Activated CD4-positive, alpha-beta memory T cell treated with anti-CD3 and anti-CD28 coated beads for 36 hours (primary cell): ENCODE measurements at regions of chr6 and their contacts with region 1.

Region 1: DNA sequence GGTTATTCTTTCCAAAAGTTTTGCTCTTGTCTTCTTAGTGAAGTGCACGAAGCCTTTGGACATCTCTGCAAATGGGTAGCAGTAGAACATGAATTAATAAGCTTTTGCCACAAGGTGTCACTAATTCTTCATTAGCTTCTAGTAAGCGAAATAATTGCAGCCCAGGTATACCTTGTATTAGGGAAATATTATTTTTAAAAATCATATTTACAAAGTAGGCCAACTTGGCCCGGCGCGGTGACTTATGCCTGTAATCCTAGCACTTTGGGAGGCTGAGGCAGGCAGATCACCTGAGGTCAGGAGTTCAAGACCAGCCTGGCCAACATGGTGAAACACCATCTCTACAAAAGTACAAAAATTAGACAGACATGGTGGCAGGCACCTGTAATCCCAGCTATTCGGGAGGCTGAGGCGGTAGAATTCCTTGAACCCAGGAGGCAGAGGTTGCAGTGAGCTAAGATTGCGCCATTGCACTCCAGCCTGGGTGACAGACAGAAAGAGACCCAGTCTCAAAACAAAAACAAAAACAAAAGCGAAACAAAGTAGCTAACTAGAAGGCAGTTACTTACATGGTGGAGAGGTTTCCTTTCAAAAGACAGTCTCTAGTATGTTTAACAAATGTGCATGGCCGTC is 8.8 kb upstream of the RSPH3 start:
- DNase-seq: peak; percentile 23
- H3K4me3 Mint-ChIP-seq: peak overlapping the region; percentile 42
- H3K27ac Mint-ChIP-seq: peak overlapping the region; percentile 14
- H3K4me1 Mint-ChIP-seq: peaks cover 35% of the 10 kb centered on the region
- H3K27me3 Mint-ChIP-seq: no peaks in the 10 kb centered on the region

Region 2: DNA sequence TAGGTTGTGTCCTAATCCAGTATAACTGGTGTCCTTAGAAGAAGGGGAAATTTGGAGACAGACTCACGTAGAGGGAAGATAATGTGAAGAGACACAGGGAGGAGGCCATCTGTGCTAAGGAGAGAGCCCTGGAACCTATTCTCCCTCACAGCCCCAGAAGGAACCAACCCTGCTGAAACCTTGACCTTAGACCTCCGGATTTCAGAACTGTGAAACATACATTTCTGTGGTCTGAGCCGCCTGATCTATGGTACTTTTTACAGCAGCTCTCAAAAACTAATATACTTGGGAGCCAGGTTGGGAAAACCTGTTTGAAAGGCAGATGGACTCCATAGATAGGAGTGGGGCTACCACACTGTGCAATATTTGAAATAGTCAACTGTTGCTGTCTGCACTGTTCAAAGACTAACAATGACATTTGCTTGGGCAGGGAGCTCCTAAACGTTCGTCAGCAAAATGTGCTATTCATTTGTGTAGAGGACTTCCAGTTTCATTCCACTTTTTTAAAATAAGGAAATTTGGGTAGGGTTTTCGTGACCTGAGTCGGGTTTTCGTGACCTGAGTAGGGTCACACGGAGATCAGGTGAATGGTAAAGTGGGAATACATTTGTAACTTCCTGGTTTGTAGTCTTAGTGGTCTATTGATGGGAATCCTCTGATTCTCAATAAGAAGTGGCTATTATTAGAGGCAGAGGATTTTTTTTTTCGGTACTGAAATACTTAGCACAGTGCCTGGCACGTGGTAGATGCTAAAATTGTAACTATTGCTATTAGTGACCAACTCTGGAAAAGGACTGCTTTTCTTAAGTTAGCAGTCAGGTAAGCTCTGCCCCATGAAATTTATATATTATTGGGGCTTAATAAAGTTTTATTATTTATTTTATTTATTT is 24.6 kb after region 1 on chr6:
- CTCF ChIA-PET with region 1: interaction called, 11 read pairs
- POLR2A ChIA-PET with region 1: no interaction called
- intact Hi-C with region 1: no loop called
- DNase-seq: no peak
- H3K4me3 Mint-ChIP-seq: no peak overlapping the region
- H3K27ac Mint-ChIP-seq: no peak overlapping the region
- H3K4me1 Mint-ChIP-seq: peaks cover 43% of the 10 kb centered on the region
- H3K27me3 Mint-ChIP-seq: no peaks in the 10 kb centered on the region

Region 3: DNA sequence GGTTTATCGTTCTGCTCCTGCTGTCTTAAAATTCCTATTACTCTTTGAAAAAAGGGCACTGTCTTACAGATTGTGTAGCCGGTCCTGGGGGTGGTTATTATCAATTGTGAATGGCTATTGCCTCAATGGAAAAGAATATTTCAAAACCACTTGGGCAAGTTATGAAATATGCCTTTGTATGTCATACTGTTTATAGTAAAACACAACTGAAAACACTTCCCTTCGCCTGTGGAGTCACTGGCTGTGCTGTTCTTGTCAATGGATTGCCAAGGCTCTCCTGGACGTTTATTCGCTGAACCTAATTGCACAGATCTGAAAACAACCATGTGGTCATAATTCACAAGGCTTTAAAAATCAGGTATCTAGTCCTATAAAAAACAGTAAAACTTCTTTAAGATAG is 83.9 kb after region 1 on chr6:
- CTCF ChIA-PET with region 1: interaction called, 12 read pairs
- POLR2A ChIA-PET with region 1: no interaction called
- intact Hi-C with region 1: no loop called
- DNase-seq: no peak
- H3K4me3 Mint-ChIP-seq: no peak overlapping the region
- H3K27ac Mint-ChIP-seq: no peak overlapping the region
- H3K4me1 Mint-ChIP-seq: peaks cover 66% of the 10 kb centered on the region
- H3K27me3 Mint-ChIP-seq: no peaks in the 10 kb centered on the region

Region 4: DNA sequence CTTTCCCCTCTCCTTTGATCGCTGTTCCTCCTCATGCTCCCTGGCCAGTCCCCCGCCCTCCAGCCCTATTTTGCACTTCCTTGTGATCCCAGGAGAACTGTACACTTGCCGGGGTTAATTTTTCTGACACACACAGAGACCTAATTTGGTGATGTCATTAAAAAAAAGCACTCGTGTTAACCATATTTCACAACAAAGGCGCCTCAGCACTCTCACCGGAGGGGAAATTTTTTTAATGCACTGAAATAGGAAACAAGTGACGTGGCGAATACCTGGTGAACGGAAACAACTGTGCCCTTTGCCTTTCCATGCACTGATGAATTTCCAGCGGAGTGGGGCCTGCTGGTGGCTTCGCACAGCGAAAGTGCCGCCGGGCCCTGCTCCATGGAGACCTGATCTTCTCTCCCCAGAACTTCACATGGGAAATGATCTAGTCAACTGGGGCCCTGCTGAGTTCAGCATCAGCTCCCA is 89.9 kb after region 1 on chr6:
- CTCF ChIA-PET with region 1: interaction called, 498 read pairs
- POLR2A ChIA-PET with region 1: interaction called, 4 read pairs
- intact Hi-C with region 1: no loop called
- DNase-seq: peak; percentile 83
- H3K4me3 Mint-ChIP-seq: peak overlapping the region; percentile 63
- H3K27ac Mint-ChIP-seq: peak overlapping the region; percentile 87
- H3K4me1 Mint-ChIP-seq: peaks cover 79% of the 10 kb centered on the region
- H3K27me3 Mint-ChIP-seq: no peaks in the 10 kb centered on the region

Region 5: GRCh38 chr6:159134701-159135364 is 126.1 kb after region 1 on chr6:
- CTCF ChIA-PET with region 1: interaction called, 248 read pairs
- POLR2A ChIA-PET with region 1: no interaction called
- intact Hi-C with region 1: loop called (anchors 1 kb)
- DNase-seq: peak; percentile 85
- H3K4me3 Mint-ChIP-seq: no peak overlapping the region
- H3K27ac Mint-ChIP-seq: no peak overlapping the region
- H3K4me1 Mint-ChIP-seq: no peaks in the 10 kb centered on the region
- H3K27me3 Mint-ChIP-seq: peaks cover 7% of the 10 kb centered on the region

Region 6: GRCh38 chr6:159161839-159162238 is 153.1 kb after region 1 on chr6:
- CTCF ChIA-PET with region 1: no interaction called
- POLR2A ChIA-PET with region 1: no interaction called
- intact Hi-C with region 1: no loop called
- DNase-seq: no peak
- H3K4me3 Mint-ChIP-seq: no peak overlapping the region
- H3K27ac Mint-ChIP-seq: no peak overlapping the region
- H3K4me1 Mint-ChIP-seq: no peaks in the 10 kb centered on the region
- H3K27me3 Mint-ChIP-seq: peaks cover 29% of the 10 kb centered on the region